ENCODE measurements at regions of chr7 and their contacts with region 1.

Region 1: GRCh38 chr7:151232091-151232916 is at the start of gene CHPF2:
- DNase-seq: peak; percentile 85
- ATAC-seq: peak; percentile 93
- H3K4me3 Mint-ChIP-seq: peak within 1 kb of the TSS; percentile 99
- H3K27ac Mint-ChIP-seq: peak within 1 kb of the TSS; percentile 96
- H3K4me1 Mint-ChIP-seq: peaks cover 35% of the 10 kb centered on the region
- H3K27me3 Mint-ChIP-seq: no peaks in the 10 kb centered on the region
- CTCF ChIP-seq: no peak
- total RNA-seq, gene CHPF2: 32.4 and 41.2 TPM in 2 replicates

Region 2: DNA sequence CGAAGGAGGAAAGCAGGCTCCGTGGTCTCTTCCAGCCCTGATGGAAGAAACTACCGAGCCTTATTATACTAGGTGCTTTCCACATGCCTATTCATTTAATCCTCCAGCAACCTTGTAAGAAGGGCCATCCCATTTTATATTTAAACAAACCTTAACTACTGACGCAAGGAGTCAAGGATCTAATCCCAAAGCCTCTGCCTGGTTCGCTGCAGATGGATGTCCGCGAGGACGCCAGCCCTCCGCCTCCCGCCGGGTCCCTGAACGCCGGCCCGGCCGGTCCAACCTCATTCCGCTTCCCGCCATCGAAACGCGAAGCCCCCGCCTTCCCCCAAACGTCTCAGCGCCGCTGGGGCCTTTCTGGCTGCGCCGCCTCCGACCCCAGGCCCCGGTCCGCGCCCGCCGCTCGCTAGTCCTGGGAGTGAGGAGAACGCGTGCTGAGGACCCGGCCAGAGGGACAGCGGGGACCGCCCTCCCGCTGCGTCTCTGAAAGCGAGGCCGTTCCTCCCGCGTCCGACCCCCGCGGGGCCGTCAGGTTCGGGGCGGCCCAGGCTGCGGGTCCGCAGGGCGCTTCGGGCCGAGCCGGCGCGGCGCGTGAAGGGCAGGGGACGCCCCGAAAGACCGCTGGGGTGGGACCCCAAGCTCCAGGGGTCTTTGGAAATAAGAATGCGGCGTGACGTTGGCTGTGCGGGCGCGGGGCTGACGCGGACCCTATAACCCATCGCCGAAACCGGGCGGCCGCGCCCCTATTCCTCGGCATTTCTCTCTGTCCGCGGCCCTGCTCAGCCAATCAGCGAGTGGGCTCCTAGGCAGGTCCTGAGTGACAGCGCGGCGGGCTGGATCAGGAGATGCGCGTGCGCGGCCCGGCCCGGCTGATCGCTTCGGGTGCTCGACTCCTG is 1359.0 kb before region 1 on chr7 and contains the start of gene ATP6V0E2:
- CTCF ChIA-PET with region 1: no interaction called
- POLR2A ChIA-PET with region 1: no interaction called
- intact Hi-C with region 1: loop called (anchors 10 kb)
- DNase-seq: peak; percentile 86
- ATAC-seq: peak; percentile 95
- H3K4me3 Mint-ChIP-seq: peak within 1 kb of the TSS; percentile 86
- H3K27ac Mint-ChIP-seq: peak within 1 kb of the TSS; percentile 53
- H3K4me1 Mint-ChIP-seq: peaks cover 42% of the 10 kb centered on the region
- H3K27me3 Mint-ChIP-seq: no peaks in the 10 kb centered on the region
- CTCF ChIP-seq: no peak
- total RNA-seq, gene ATP6V0E2: 9.1 and 10.4 TPM in 2 replicates

Region 3: GRCh38 chr7:151080522-151081169 is 151.7 kb before region 1 on chr7 and contains the start of gene FASTK:
- CTCF ChIA-PET with region 1: no interaction called
- POLR2A ChIA-PET with region 1: interaction called, 4 read pairs
- intact Hi-C with region 1: loop called (anchors 2 kb)
- DNase-seq: peak; percentile 81
- ATAC-seq: peak; percentile 83
- H3K4me3 Mint-ChIP-seq: peak within 1 kb of the TSS; percentile 91
- H3K27ac Mint-ChIP-seq: peak within 1 kb of the TSS; percentile 70
- H3K4me1 Mint-ChIP-seq: peaks cover 49% of the 10 kb centered on the region
- H3K27me3 Mint-ChIP-seq: peaks cover 8% of the 10 kb centered on the region
- CTCF ChIP-seq: no peak
- total RNA-seq, gene FASTK: 97.6 and 103 TPM in 2 replicates

Region 4: GRCh38 chr7:151172273-151173141 is 59.8 kb before region 1 on chr7:
- CTCF ChIA-PET with region 1: interaction called, 5 read pairs
- POLR2A ChIA-PET with region 1: no interaction called
- intact Hi-C with region 1: loop called (anchors 5 kb)
- DNase-seq: peak; percentile 72
- ATAC-seq: peak; percentile 86
- H3K4me3 Mint-ChIP-seq: no peak overlapping the region
- H3K27ac Mint-ChIP-seq: no peak overlapping the region
- H3K4me1 Mint-ChIP-seq: peaks cover 6% of the 10 kb centered on the region
- H3K27me3 Mint-ChIP-seq: peaks cover 56% of the 10 kb centered on the region
- CTCF ChIP-seq: peak; percentile 100

Region 5: GRCh38 chr7:151327659-151328058 is 95.4 kb after region 1 on chr7:
- CTCF ChIA-PET with region 1: no interaction called
- POLR2A ChIA-PET with region 1: no interaction called
- intact Hi-C with region 1: no loop called
- DNase-seq: no peak
- ATAC-seq: no peak
- H3K4me3 Mint-ChIP-seq: no peak overlapping the region
- H3K27ac Mint-ChIP-seq: no peak overlapping the region
- H3K4me1 Mint-ChIP-seq: no peaks in the 10 kb centered on the region
- H3K27me3 Mint-ChIP-seq: peaks cover 2% of the 10 kb centered on the region
- CTCF ChIP-seq: no peak

Region 6: GRCh38 chr7:151341357-151342101 is 109.2 kb after region 1 on chr7 and contains the start of gene NUB1:
- CTCF ChIA-PET with region 1: no interaction called
- POLR2A ChIA-PET with region 1: interaction called, 5 read pairs
- intact Hi-C with region 1: loop called (anchors 1 kb)
- DNase-seq: peak; percentile 99
- ATAC-seq: peak; percentile 90
- H3K4me3 Mint-ChIP-seq: peak within 1 kb of the TSS; percentile 86
- H3K27ac Mint-ChIP-seq: peak within 1 kb of the TSS; percentile 93
- H3K4me1 Mint-ChIP-seq: peaks cover 52% of the 10 kb centered on the region
- H3K27me3 Mint-ChIP-seq: no peaks in the 10 kb centered on the region
- CTCF ChIP-seq: no peak
- total RNA-seq, gene NUB1: 47.5 and 52.7 TPM in 2 replicates

Measured in activated B cell treated with CpG ODN at 0.5 μM for 24 hours (primary cell).